CD14-positive monocyte (primary cell): ENCODE measurements at regions of chr12 and their contacts with region 1.

Region 1: DNA sequence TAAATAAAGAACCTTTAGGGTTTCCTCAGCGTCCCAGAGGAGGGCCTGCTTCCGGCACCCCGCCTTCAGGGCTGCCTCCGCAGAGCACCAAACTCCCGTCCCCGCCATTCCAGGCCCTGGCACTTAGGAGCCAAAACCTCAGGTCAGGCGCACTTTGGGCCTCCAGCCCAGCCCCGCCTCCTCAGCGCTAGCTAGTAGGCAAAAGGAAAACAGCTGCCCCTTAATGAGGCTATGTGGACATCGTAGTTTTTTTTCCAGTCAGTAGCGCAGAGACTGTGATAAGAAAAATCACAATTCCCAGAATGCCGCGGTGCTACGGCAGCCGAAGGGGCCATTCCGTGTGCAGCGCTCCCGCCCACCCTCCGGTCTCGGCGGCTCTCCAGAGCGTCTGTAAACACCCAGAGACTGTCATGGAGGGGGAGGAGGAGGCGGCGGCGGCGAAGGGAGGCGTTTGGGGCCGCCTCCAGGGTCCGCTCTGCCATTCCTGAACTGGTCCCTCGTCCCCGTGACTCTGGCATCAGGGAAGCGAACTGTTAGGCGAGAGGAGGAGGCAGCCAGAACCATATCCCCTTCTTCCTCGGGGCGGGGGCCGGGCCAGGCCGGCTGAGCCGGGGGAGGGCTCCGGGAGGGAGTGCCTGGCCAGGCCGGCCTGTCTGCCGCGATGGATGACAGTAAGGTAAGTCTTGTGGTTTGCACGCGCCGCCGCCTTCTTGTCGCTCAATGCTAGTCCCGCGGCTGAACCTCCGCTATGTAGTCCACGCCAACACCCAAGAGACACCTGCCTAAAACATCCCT is at the start of gene CREBL2:
- DNase-seq: peak; percentile 77 to 86 (median 85)
- H3K4me3 ChIP-seq: peak within 1 kb of the TSS; percentile 62 to 84 (median 67)
- H3K4me3 Mint-ChIP-seq: peak within 1 kb of the TSS; percentile 93
- H3K27ac ChIP-seq: peak within 1 kb of the TSS; percentile 77 to 87
- H3K27ac Mint-ChIP-seq: peak within 1 kb of the TSS; percentile 89 to 94 (median 91)
- H3K4me1 ChIP-seq: peaks cover 41 to 46% of the 10 kb centered on the region in 2 donors
- H3K4me1 Mint-ChIP-seq: peaks cover 48% of the 10 kb centered on the region
- H3K27me3 ChIP-seq: no peaks in the 10 kb centered on the region
- H3K27me3 Mint-ChIP-seq: no peaks in the 10 kb centered on the region
- CTCF ChIP-seq: no peak
- polyA plus RNA-seq, gene CREBL2: 14.4 to 45.9 (median 38.2) TPM

Region 2: DNA sequence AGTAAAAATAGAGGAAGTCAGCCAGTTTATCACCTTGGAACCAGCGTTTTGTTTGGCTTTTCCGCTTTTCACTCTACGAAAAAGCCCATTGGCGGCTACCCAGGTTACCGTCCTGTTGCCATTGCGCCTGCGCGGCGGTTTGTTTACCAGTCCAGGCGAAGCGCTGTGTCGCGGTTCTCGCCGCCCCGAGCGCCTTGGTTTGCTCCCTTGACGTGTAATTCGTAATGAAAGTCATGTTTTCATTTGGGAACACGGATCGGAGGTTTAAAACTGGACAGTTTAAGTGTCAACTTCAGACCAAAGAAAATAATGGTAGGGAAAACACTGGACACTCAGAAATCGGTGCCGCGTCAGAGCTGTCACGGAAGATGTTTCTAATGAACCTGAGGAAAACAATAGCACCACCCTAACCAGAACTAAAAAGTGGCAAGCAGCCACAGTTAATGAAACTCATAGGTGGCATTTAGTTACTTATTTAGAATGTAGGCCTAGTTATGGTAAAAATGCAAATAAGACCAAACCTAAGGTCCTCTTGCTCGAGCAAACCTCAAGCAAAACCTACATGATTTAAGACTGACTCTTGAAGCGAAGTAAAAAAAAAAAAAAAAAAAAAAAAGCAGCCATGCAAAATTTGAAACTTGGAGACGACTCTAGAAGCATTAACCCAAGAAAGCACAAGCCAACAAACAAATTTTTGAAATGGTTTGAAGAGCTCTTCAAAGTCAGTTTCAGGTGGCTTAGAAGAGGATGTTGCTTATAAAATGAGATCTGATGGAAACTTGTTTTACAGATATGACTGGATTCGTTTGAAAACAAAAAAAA is 85.1 kb after region 1 on chr12:
- intact Hi-C with region 1: loop called in 1 of 2 experiments (anchors 10 kb)
- DNase-seq: peak; percentile 90 to 98 (median 92)
- H3K4me3 ChIP-seq: peak overlapping the region; percentile 58 to 83 (median 75)
- H3K4me3 Mint-ChIP-seq: peak overlapping the region; percentile 83 to 95
- H3K27ac ChIP-seq: peak overlapping the region; percentile 97
- H3K27ac Mint-ChIP-seq: peak overlapping the region; percentile 96 to 98 (median 98)
- H3K4me1 ChIP-seq: peaks cover 26 to 28% of the 10 kb centered on the region in 2 donors
- H3K4me1 Mint-ChIP-seq: peaks cover 29% of the 10 kb centered on the region
- H3K27me3 ChIP-seq: no peaks in the 10 kb centered on the region
- H3K27me3 Mint-ChIP-seq: peaks cover 0 to 3% (median 0%) of the 10 kb centered on the region in 3 donors
- CTCF ChIP-seq: no peak

Region 3: GRCh38 chr12:12724661-12725545 is 113.2 kb after region 1 on chr12:
- intact Hi-C with region 1: loop called in 1 of 2 experiments (anchors 5 kb)
- DNase-seq: peak; percentile 87 to 94 (median 93)
- H3K4me3 ChIP-seq: peak overlapping the region; percentile 69 to 86 (median 84)
- H3K4me3 Mint-ChIP-seq: peak overlapping the region; percentile 95 to 96
- H3K27ac ChIP-seq: peak overlapping the region; percentile 93 to 96
- H3K27ac Mint-ChIP-seq: peak overlapping the region; percentile 94 to 99 (median 98)
- H3K4me1 ChIP-seq: peaks cover 36 to 54% of the 10 kb centered on the region in 2 donors
- H3K4me1 Mint-ChIP-seq: peaks cover 54% of the 10 kb centered on the region
- H3K27me3 ChIP-seq: no peaks in the 10 kb centered on the region
- H3K27me3 Mint-ChIP-seq: peaks cover 0 to 6% (median 0%) of the 10 kb centered on the region in 3 donors
- CTCF ChIP-seq: no peak